Ovary (tissue), 10 donors: ENCODE measurements at regions of chr10 and their contacts with region 1.

Region 1: GRCh38 chr10:129971381-129972144 is 7.5 kb upstream of the EBF3 start:
- DNase-seq: peak in 3 of 5 donors; percentile 29 to 65 (median 58)
- H3K4me3 ChIP-seq: no peak overlapping the region
- H3K27ac ChIP-seq: no peak overlapping the region
- H3K4me1 ChIP-seq: peaks cover 6% of the 10 kb centered on the region
- H3K27me3 ChIP-seq: peaks cover 14% of the 10 kb centered on the region
- CTCF ChIP-seq: peak in 2 of 3 donors; percentile 26 to 27
- EP300 ChIP-seq: no peak
- POLR2A ChIP-seq: no peak

Region 2: DNA sequence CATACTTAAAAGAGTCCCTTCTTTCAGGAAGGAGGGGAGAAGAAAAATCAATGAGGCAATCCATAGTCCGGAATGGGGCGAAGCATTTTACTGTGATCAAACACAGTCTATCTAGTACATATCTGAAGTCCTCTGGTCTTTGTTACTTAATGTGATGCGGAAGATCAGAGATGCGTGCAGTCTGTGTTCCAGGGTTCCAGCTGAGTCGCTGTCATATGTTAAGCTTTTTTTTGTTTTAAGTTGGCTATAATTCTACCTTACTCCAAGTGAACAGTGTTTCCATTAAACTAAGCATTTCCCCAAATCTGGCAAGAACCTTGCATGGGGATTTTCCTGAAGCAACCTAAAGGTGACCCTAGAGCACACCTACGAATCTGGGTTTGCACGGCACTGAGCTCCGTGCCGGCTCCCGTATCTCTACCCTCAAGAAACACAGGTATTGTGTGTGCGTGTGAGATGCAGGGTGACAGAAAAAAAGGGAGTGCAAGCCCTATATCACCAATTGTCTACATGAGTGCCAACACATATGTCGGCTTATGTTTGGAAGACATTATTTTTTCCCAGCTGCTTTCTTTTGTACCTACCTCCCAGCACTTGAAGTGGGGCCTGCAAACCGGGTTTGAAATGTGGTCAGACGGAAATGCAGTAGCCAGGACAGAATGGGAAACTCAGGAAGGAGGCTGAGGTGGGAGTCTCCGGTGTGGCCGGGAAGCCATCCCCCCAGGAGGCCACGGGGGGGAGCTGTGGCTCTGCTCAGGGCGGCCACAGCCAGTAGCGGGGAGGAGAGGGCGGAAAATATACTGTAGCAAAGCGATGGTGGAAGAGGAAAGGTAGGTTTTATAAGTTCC is 940.3 kb before region 1 on chr10:
- intact Hi-C with region 1: loop called in 3 of 4 experiments (anchors 5 to 10 kb)
- DNase-seq: peak in 3 of 5 donors; percentile 34 to 61 (median 48)
- H3K4me3 ChIP-seq: no peak overlapping the region
- H3K27ac ChIP-seq: no peak overlapping the region
- H3K4me1 ChIP-seq: no peaks in the 10 kb centered on the region
- H3K27me3 ChIP-seq: no peaks in the 10 kb centered on the region
- CTCF ChIP-seq: peak in 2 of 3 donors; percentile 33 to 39
- EP300 ChIP-seq: no peak
- POLR2A ChIP-seq: no peak

Region 3: DNA sequence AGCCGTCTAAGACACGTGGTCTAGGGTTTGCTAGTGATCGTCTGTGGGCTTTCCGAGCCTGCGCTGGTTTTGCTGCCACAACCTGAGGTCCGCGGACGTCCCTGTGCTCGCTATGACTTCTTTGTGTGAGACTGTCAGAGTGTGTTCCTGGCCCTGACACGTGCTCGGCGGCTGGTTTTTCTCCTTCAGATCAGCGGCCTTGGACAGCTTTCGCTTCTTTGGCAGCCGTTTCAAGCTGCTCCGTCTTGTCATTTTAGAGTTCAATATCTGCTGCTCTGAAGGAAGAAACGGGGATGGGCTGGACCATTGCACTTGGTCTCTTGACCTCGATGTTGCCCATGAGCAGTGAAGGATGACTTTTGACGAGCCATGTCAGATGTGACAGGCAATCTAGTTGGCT is 357.2 kb before region 1 on chr10:
- intact Hi-C with region 1: no loop called
- DNase-seq: peak in 4 of 5 donors; percentile 23 to 49 (median 36)
- H3K4me3 ChIP-seq: no peak overlapping the region
- H3K27ac ChIP-seq: no peak overlapping the region
- H3K4me1 ChIP-seq: peaks cover 9% of the 10 kb centered on the region
- H3K27me3 ChIP-seq: no peaks in the 10 kb centered on the region
- CTCF ChIP-seq: no peak
- EP300 ChIP-seq: no peak
- POLR2A ChIP-seq: no peak

Region 4: DNA sequence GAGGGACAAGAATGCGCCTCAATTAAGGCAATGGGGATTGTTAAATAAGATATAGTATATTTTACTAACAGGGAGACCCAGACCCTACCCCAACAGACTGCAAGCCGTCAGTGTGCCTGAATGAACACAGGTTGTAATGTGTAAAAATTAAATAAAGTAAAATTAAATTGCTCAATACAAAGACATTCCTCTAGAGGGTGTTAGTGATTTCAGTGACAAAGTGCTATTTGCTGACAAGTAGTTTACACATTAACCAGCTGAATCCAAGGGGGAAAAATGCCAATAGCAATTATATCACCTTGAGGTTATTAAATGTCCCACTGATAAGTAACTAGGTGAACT is 118.0 kb before region 1 on chr10:
- intact Hi-C with region 1: no loop called
- DNase-seq: no peak
- H3K4me3 ChIP-seq: no peak overlapping the region
- H3K27ac ChIP-seq: no peak overlapping the region
- H3K4me1 ChIP-seq: no peaks in the 10 kb centered on the region
- H3K27me3 ChIP-seq: no peaks in the 10 kb centered on the region
- CTCF ChIP-seq: no peak
- EP300 ChIP-seq: no peak
- POLR2A ChIP-seq: no peak

Region 5: GRCh38 chr10:129887381-129887905 is 84.1 kb before region 1 on chr10:
- intact Hi-C with region 1: loop called in 1 of 4 experiments (anchors 2 kb)
- DNase-seq: no peak
- H3K4me3 ChIP-seq: no peak overlapping the region
- H3K27ac ChIP-seq: no peak overlapping the region
- H3K4me1 ChIP-seq: no peaks in the 10 kb centered on the region
- H3K27me3 ChIP-seq: no peaks in the 10 kb centered on the region
- CTCF ChIP-seq: no peak
- EP300 ChIP-seq: no peak
- POLR2A ChIP-seq: no peak